CD4-positive, alpha-beta T cell (primary cell): ENCODE measurements at regions of chr13 and their contacts with region 1.

Region 1: GRCh38 chr13:90103099-90103784 is 1244.2 kb upstream of the MIR17HG start:
- DNase-seq: no peak
- ATAC-seq: no peak
- H3K4me3 ChIP-seq: no peak overlapping the region
- H3K4me3 Mint-ChIP-seq: no peak overlapping the region
- H3K27ac ChIP-seq: no peak overlapping the region
- H3K27ac Mint-ChIP-seq: no peak overlapping the region
- H3K4me1 ChIP-seq: no peaks in the 10 kb centered on the region
- H3K4me1 Mint-ChIP-seq: no peaks in the 10 kb centered on the region
- H3K27me3 ChIP-seq: no peaks in the 10 kb centered on the region
- H3K27me3 Mint-ChIP-seq: no peaks in the 10 kb centered on the region
- CTCF ChIP-seq: no peak

Region 2: DNA sequence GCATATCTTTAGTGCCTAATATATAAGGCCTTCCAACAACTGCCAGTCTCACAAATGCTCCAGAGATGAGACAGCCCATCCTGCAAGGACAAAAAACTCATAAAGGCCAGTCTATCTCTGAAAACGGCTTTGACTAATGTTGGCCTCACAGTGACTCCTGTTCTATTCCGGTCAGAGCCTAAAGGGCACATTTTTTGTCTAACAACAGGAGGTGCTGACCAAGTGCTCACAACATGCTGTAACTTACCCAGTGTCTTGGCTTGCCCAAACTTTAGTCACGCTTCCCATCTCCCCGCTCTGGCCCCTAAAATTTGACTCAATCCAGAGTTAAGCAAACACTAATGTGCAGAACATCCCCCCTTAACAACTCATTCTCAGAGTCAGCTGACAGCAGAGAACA is 167.0 kb before region 1 on chr13:
- CTCF ChIA-PET with region 1: no interaction called
- POLR2A ChIA-PET with region 1: no interaction called
- intact Hi-C with region 1: no loop called
- DNase-seq: no peak
- ATAC-seq: no peak
- H3K4me3 ChIP-seq: no peak overlapping the region
- H3K4me3 Mint-ChIP-seq: no peak overlapping the region
- H3K27ac ChIP-seq: no peak overlapping the region
- H3K27ac Mint-ChIP-seq: no peak overlapping the region
- H3K4me1 ChIP-seq: no peaks in the 10 kb centered on the region
- H3K4me1 Mint-ChIP-seq: no peaks in the 10 kb centered on the region
- H3K27me3 ChIP-seq: no peaks in the 10 kb centered on the region
- H3K27me3 Mint-ChIP-seq: no peaks in the 10 kb centered on the region
- CTCF ChIP-seq: no peak

Region 3: GRCh38 chr13:90055121-90055520 is 48.1 kb before region 1 on chr13:
- CTCF ChIA-PET with region 1: no interaction called
- POLR2A ChIA-PET with region 1: no interaction called
- intact Hi-C with region 1: loop called in 1 of 2 experiments (anchors 5 kb)
- DNase-seq: no peak
- ATAC-seq: no peak
- H3K4me3 ChIP-seq: no peak overlapping the region
- H3K4me3 Mint-ChIP-seq: no peak overlapping the region
- H3K27ac ChIP-seq: no peak overlapping the region
- H3K27ac Mint-ChIP-seq: no peak overlapping the region
- H3K4me1 ChIP-seq: no peaks in the 10 kb centered on the region
- H3K4me1 Mint-ChIP-seq: no peaks in the 10 kb centered on the region
- H3K27me3 ChIP-seq: no peaks in the 10 kb centered on the region
- H3K27me3 Mint-ChIP-seq: no peaks in the 10 kb centered on the region
- CTCF ChIP-seq: no peak

Region 4: GRCh38 chr13:90068658-90069057 is 34.6 kb before region 1 on chr13:
- CTCF ChIA-PET with region 1: no interaction called
- POLR2A ChIA-PET with region 1: no interaction called
- intact Hi-C with region 1: no loop called
- DNase-seq: no peak
- ATAC-seq: no peak
- H3K4me3 ChIP-seq: no peak overlapping the region
- H3K4me3 Mint-ChIP-seq: no peak overlapping the region
- H3K27ac ChIP-seq: no peak overlapping the region
- H3K27ac Mint-ChIP-seq: no peak overlapping the region
- H3K4me1 ChIP-seq: no peaks in the 10 kb centered on the region
- H3K4me1 Mint-ChIP-seq: no peaks in the 10 kb centered on the region
- H3K27me3 ChIP-seq: no peaks in the 10 kb centered on the region
- H3K27me3 Mint-ChIP-seq: no peaks in the 10 kb centered on the region
- CTCF ChIP-seq: no peak